ENCODE measurements at regions of chr7 and their contacts with region 1.

Region 1: GRCh38 chr7:130982160-130982638 is 248.2 kb upstream of the KLF14 start:
- H3K4me3 ChIP-seq: no peak overlapping the region
- H3K27ac ChIP-seq: no peak overlapping the region
- H3K4me1 ChIP-seq: no peaks in the 10 kb centered on the region
- CTCF ChIP-seq: no peak

Region 2: GRCh38 chr7:130352221-130353075 is 629.8 kb before region 1 on chr7:
- CTCF ChIA-PET with region 1: no interaction called
- POLR2A ChIA-PET with region 1: no interaction called
- H3K4me3 ChIP-seq: no peak overlapping the region
- H3K27ac ChIP-seq: no peak overlapping the region
- H3K4me1 ChIP-seq: peaks cover 17% of the 10 kb centered on the region
- CTCF ChIP-seq: no peak

Region 3: GRCh38 chr7:130943336-130943901 is 38.8 kb before region 1 on chr7:
- CTCF ChIA-PET with region 1: interaction called, 11 read pairs
- POLR2A ChIA-PET with region 1: no interaction called
- H3K4me3 ChIP-seq: no peak overlapping the region
- H3K27ac ChIP-seq: no peak overlapping the region
- H3K4me1 ChIP-seq: 0 out of 2 replicates have a peak, but pooled peaks cover 3% of the 10 kb centered on the region
- CTCF ChIP-seq: no peak

Region 4: DNA sequence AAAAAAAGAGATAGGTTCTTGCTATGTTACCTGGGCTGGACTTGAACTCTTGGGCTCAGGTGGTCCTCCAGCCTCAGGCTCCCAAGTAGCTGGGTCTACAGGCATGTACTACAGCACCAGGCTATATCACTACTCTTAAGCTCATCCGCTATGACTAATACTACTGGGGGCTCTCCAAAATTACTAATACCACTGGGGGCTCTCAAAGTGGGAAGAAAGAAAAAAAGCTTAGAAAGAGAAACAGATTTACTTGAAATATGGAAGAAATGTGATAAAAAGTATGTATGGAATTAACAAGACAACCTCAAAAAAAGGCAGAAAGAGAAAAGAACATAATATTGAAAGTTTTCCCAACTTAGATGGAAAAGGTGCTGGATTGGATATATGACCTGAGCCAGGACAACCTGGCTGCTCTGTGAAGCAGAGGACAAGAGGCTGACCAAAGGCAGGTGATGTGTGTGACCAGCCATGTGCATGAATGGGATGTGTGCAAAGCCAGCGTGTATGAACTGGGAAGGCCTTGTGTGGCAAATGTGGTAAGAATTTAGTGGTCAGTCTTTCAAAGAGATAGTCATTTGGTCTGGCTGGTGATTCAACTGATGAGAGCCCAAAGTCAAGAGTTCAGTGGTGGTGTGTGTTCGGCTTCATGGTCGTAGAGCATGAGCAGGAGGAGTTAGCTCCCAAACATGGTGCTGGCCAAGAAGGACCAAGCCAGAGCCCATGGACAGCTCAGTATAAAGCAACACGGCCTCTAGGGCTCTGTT is 15.8 kb before region 1 on chr7:
- CTCF ChIA-PET with region 1: interaction called, 24 read pairs
- POLR2A ChIA-PET with region 1: no interaction called
- H3K4me3 ChIP-seq: no peak overlapping the region
- H3K27ac ChIP-seq: no peak overlapping the region
- H3K4me1 ChIP-seq: 0 out of 2 replicates have a peak, but pooled peaks cover 2% of the 10 kb centered on the region
- CTCF ChIP-seq: no peak

Region 5: GRCh38 chr7:131007394-131008330 is 25.5 kb after region 1 on chr7:
- CTCF ChIA-PET with region 1: interaction called, 28 read pairs
- POLR2A ChIA-PET with region 1: no interaction called
- H3K4me3 ChIP-seq: no peak overlapping the region
- H3K27ac ChIP-seq: no peak overlapping the region
- H3K4me1 ChIP-seq: peaks cover 12% of the 10 kb centered on the region
- CTCF ChIP-seq: peak; percentile 82

Measured in HEK293 (cell line).